ENCODE measurements at regions of chr14 and their contacts with region 1.

Region 1: GRCh38 chr14:103628684-103629502 is at the start of gene KLC1:
- DNase-seq: peak; percentile 71 to 93 (median 84)
- ATAC-seq: peak; percentile 87
- H3K4me3 ChIP-seq: peak within 1 kb of the TSS; percentile 78
- H3K4me3 Mint-ChIP-seq: peak within 1 kb of the TSS; percentile 74 to 91 (median 88)
- H3K27ac ChIP-seq: peak within 1 kb of the TSS; percentile 98
- H3K27ac Mint-ChIP-seq: peak within 1 kb of the TSS; percentile 60 to 93 (median 88)
- H3K4me1 ChIP-seq: peaks cover 18 to 29% of the 10 kb centered on the region in 2 donors
- H3K4me1 Mint-ChIP-seq: peaks cover 23 to 64% (median 38%) of the 10 kb centered on the region in 7 donors
- H3K27me3 ChIP-seq: no peaks in the 10 kb centered on the region
- H3K27me3 Mint-ChIP-seq: no peaks in the 10 kb centered on the region
- total RNA-seq, gene KLC1: 150 to 268 (median 174) TPM

Region 2: GRCh38 chr14:103528587-103529382 is 100.1 kb before region 1 on chr14 and contains the start of gene TRMT61A:
- CTCF ChIA-PET with region 1: no interaction called
- POLR2A ChIA-PET with region 1: interaction called, 3 read pairs
- intact Hi-C with region 1: loop called in 1 of 2 experiments (anchors 1 kb)
- DNase-seq: peak; percentile 58 to 80 (median 74)
- ATAC-seq: peak; percentile 85
- H3K4me3 ChIP-seq: peak within 1 kb of the TSS; percentile 96
- H3K4me3 Mint-ChIP-seq: peak within 1 kb of the TSS; percentile 89 to 97 (median 95)
- H3K27ac ChIP-seq: peak within 1 kb of the TSS; percentile 81
- H3K27ac Mint-ChIP-seq: peak within 1 kb of the TSS; percentile 91 to 98 (median 96)
- H3K4me1 ChIP-seq: peaks cover 19 to 21% of the 10 kb centered on the region in 2 donors
- H3K4me1 Mint-ChIP-seq: peaks cover 30 to 39% (median 35%) of the 10 kb centered on the region in 7 donors
- H3K27me3 ChIP-seq: no peaks in the 10 kb centered on the region
- H3K27me3 Mint-ChIP-seq: peaks cover 0 to 21% (median 1%) of the 10 kb centered on the region in 5 donors
- total RNA-seq, gene TRMT61A: 9.8 to 15.1 (median 14.1) TPM

Region 3: DNA sequence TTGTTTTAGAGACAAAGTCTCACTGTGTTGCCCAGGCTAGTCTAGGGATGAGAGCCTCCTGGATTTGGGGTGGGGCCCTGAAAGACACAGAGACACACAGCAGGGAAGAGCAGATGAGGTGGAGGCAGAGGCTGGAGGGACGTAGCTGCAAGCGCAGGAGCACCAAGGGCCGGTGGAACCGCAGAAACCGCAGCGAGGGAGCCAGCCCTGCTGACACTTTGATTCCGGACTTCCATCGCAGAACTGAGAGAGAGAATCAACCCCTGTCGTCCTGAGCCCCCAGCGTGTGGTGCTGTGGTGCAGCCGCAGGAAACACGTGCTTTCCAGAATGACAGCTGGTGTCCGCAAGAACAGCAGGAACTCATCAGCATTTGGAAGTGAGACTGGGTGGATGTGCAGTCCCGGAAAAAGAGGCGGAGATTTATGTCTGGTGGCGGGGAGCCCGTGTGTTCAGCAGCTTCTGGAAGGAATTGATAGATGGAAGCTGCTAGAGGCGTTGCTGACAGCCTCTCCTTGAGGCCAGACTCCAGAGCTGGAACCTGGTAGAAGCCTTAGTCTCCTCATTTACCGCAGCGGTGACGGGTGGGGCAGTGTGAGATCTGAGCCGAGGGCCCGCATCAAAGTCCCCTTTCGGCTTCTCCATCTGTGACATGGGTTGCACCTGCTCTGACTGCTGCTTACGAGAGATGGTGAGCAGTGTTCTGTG is 21.8 kb before region 1 on chr14:
- CTCF ChIA-PET with region 1: no interaction called
- POLR2A ChIA-PET with region 1: interaction called, 9 read pairs
- intact Hi-C with region 1: loop called (anchors 1 to 2 kb)
- DNase-seq: peak; percentile 15 to 63 (median 46)
- ATAC-seq: peak; percentile 84
- H3K4me3 ChIP-seq: peak overlapping the region; percentile 49
- H3K4me3 Mint-ChIP-seq: peak overlapping the region; percentile 76 to 93 (median 84)
- H3K27ac ChIP-seq: no peak overlapping the region
- H3K27ac Mint-ChIP-seq: peak overlapping the region; percentile 19 to 86 (median 52)
- H3K4me1 ChIP-seq: peaks cover 18 to 21% of the 10 kb centered on the region in 2 donors
- H3K4me1 Mint-ChIP-seq: peaks cover 14 to 28% (median 21%) of the 10 kb centered on the region in 7 donors
- H3K27me3 ChIP-seq: no peaks in the 10 kb centered on the region
- H3K27me3 Mint-ChIP-seq: peaks cover 0 to 28% (median 0%) of the 10 kb centered on the region in 5 donors

Measured in naive thymus-derived CD4-positive, alpha-beta T cell (primary cell).